Dorsolateral prefrontal cortex (tissue), 120 donors: ENCODE measurements at regions of chr3 and their contacts with region 1.

Region 1: DNA sequence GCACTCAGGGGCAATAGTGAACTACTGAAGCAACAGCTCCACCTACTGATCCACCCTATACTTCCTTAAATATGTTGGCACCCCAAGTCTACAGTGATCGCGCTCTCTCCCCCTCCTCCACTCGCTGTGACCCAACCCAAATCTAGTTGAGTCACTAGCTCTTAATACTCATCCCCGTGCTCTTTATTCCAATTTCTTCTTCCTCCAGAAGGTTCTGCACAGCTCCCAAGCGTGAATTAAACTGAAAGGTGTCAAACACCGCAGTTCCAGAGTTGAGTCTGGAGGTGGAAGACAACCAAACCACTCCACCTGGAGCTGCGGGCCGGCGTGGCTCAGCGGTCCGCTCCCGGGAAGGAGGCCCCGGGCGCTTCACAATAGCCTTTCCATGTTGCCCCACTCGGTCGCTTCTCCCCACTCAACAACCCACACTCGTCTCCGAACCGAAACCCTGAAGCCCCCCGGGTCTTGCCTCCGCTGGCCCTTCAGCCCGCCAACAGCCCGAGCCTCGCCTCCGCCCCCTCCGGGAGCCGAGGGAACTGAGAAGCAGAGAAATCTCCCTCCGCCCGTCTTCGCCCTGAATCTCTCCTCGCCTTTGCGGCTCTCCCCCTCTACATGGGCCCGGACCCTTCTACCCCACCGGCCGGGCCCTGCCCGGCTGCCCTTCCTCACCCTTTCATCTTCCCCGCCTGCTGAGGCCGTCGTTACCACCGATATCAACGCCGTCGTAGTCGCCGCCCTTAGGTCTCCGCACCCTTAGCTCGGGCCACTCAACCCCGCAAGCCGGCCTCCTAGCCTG is 578 bp downstream of the NAA50 start:
- DNase-seq: peak in 8 of 10 donors; percentile 39 to 66 (median 46)
- H3K4me3 ChIP-seq: peak overlapping the region; percentile 67 to 99 (median 91)
- H3K27ac ChIP-seq: peak overlapping the region; percentile 92 to 100 (median 100)
- H3K27me3 ChIP-seq: no peaks in the 10 kb centered on the region
- CTCF ChIP-seq: peak in 52 of 56 donors; percentile 37 to 79 (median 60)

Region 2: DNA sequence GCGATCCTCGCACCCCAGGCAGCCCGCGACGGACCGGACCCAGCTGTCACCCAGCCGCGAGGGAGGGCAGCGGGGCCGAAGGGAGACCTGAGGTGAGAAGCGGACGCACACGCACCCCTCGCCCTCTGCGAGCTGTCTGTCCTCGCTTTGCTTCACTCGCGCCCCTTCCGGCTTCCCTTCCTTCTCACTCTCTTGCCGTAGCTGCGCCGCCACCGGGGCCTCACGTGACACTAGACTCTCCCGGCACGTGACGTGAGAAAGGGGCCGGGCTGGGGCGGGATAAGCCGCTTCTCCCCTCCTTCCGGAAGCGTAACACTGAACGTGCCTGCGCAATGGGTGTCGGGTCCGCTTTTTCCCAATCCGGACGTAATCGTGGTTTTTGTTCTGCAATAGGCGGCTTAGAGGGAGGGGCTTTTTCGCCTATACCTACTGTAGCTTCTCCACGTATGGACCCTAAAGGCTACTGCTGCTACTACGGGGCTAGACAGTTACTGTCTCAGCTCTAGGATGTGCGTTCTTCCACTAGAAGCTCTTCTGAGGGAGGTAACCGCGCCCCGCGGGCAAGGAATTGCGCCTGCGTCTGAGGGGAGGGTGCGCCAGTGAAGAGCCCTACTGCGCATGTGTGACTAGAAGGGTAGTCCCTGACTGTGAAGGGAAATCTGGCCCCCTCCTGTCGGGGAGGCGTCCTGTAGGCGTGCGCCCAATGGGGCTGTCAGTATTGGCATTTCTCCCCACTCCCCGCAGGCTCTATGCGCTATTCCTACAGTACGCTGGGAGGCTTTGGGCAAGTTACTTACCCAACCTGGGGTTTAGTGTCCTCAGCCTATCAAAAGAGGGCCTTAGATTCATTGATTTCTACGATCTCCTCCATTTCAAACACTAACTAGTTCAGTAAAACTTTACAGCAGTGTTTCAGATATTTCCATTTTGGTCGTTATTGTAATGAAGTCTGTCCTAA is 1183.5 kb before region 1 on chr3 and contains the starts of genes ATG3 and SLC35A5:
- intact Hi-C with region 1: loop called in 1 of 2 experiments (anchors 5 kb)
- DNase-seq: peak; percentile 95 to 99 (median 98)
- H3K4me3 ChIP-seq: peak within 1 kb of the TSS; percentile 63 to 99 (median 93)
- H3K27ac ChIP-seq: peak within 1 kb of the TSS; percentile 86 to 100 (median 99)
- H3K27me3 ChIP-seq: no peaks in the 10 kb centered on the region
- CTCF ChIP-seq: peak in 26 of 56 donors; percentile 4 to 40 (median 13)
- total RNA-seq, gene ATG3: 36.3 to 85.0 (median 48.6) TPM
- total RNA-seq, gene SLC35A5: 39.0 to 94.4 (median 57.5) TPM

Region 3: GRCh38 chr3:113514265-113514769 is 231.2 kb before region 1 on chr3:
- intact Hi-C with region 1: loop called in 1 of 2 experiments (anchors 2 kb)
- DNase-seq: no peak
- H3K4me3 ChIP-seq: peak overlapping the region; percentile 66 to 99 (median 89)
- H3K27ac ChIP-seq: peak overlapping the region in 52 of 59 donors; percentile 52 to 93 (median 84)
- H3K27me3 ChIP-seq: no peaks in the 10 kb centered on the region
- CTCF ChIP-seq: no peak

Region 4: DNA sequence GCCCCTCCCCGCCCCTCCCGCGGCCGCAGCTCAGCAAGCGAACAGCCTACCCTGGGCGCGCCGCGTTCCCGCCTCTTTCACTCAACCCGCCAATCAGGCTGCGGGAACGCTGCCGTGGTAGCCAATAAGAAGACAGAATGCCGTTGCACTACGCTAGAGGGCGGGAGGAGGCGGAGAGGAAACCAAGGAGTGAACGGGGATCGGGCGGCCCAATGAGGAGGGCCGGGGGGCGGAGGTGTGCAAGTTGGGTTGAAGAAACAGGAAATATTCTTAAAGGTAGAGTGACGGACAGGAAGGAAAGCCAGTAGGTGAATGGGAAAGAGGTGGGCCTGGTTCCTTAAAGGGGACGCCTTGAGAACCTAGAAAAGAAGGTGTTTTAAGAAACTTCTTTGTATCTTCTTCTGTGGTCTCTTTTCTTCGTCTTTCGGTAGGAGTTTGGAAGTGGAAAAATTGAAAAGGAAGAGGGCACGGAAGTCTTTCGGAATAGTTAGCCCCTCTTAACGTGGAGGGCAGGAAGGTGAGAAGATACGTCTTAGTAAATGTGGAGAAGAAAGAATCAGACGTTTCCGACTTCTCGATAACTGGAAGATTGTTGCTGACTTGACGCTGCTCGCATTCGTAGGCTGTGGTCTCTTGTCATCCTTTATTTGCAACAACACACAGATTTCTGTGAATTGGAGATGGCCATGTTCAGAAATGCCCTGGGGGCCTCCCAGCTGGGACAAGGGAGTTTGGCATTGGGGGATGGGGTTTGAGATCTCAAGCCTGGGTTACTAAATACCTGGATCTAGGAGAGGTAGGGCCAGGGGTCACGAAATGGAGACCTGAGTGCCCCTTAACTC is 48.6 kb before region 1 on chr3:
- intact Hi-C with region 1: loop called (anchors 1 to 2 kb)
- DNase-seq: peak; percentile 97 to 100 (median 99)
- H3K4me3 ChIP-seq: peak overlapping the region; percentile 61 to 99 (median 88)
- H3K27ac ChIP-seq: peak overlapping the region; percentile 49 to 100 (median 97)
- H3K27me3 ChIP-seq: no peaks in the 10 kb centered on the region
- CTCF ChIP-seq: peak in 43 of 56 donors; percentile 4 to 59 (median 38)

Region 5: DNA sequence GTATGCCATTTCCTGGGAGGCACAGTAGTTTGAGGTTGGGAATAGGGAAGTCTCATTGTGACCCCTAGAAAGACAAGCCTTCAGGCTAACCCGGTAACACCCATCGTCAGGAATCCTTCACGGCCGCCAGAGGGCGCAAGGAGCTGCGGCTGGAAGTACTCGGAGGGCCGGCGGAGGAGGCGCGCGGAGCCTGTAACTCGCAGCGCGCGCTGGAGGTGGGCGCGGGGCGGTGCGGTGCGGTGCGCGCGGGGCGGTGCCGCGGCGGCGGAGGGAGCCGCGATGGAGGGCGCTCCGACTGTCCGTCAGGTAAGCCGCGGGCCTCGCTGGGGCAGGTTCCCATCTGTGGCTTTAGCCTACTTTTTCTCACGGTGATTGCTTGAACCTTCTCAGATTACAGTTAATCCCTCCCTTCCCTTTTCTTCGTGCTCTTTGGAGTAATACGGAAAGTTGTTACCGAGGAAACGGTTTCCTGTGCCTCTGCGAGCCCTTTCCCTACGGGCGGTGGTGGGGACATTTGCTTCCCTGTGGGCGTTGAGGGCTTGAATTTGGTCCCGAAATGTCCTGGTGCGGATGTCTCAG is 93.2 kb after region 1 on chr3 and contains the start of gene GRAMD1C:
- intact Hi-C with region 1: loop called in 1 of 2 experiments (anchors 5 kb)
- DNase-seq: peak; percentile 73 to 89 (median 84)
- H3K4me3 ChIP-seq: peak within 1 kb of the TSS; percentile 37 to 77 (median 64)
- H3K27ac ChIP-seq: peak within 1 kb of the TSS in 40 of 59 donors; percentile 4 to 81 (median 52)
- H3K27me3 ChIP-seq: no peaks in the 10 kb centered on the region
- CTCF ChIP-seq: peak; percentile 67 to 93 (median 84)
- total RNA-seq, gene GRAMD1C: 8.4 to 46.7 (median 22.7) TPM

Region 6: DNA sequence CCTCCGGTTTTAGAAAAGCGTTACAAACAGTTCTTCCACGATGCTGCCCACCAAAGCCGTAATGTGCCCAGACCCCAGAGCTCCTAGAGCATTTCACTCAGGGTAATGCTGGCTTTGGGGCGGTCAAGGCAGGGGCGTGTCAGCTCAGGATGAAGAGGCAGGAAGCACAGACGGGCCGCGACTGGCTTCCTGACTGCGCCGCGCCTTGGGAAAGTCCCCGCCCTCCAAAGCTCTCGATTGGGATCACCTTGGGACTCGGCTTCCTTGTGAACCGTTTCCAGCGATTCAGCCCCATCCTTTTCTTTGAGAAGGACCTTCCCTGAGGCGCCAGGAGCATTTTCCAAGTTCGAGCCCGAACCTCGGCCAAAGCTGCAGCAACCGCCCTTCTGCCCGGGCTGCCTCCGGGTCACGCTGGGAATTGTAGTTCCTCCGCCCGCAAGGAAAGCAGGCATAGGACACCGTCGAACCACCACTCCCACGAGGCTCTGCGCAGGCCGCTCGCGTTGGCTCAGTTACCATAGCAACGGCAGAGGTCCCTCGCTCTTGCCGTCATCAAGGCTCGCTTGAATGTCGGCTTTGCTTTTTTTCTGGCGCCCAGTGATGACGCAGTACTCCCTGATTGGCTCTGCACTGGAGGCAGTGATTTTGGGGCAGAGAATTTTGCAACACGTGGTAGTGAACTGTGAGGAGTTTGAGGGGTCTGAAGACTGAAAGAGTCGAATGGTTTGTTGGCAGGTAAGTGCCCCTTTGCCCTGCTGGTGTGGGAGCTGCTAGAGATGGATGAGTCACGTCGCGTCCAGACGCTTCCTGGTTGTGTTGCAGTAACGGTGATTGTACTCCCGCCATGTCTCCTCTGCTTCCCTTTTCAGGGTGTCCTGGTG is 310.9 kb after region 1 on chr3 and contains the starts of genes CCDC191 and QTRT2:
- intact Hi-C with region 1: loop called (anchors 5 kb)
- DNase-seq: peak; percentile 98 to 100 (median 99)
- H3K4me3 ChIP-seq: peak within 1 kb of the TSS; percentile 60 to 100 (median 88)
- H3K27ac ChIP-seq: peak within 1 kb of the TSS in 49 of 59 donors; percentile 23 to 83 (median 64)
- H3K27me3 ChIP-seq: no peaks in the 10 kb centered on the region
- CTCF ChIP-seq: peak in 23 of 56 donors; percentile 3 to 50 (median 26)
- total RNA-seq, gene CCDC191: 5.7 to 20.1 (median 11.1) TPM
- total RNA-seq, gene QTRT2: 7.6 to 24.3 (median 14.9) TPM